CD8-positive, alpha-beta T cell (primary cell): ENCODE measurements at regions of chr13 and their contacts with region 1.

Region 1: GRCh38 chr13:21849323-21849722 is 178.4 kb downstream of the FGF9 start:
- DNase-seq: peak in 3 of 9 experiments; percentile 20 to 63 (median 53)
- ATAC-seq: peak; percentile 67
- H3K4me3 ChIP-seq: no peak overlapping the region
- H3K4me3 Mint-ChIP-seq: no peak overlapping the region
- H3K27ac ChIP-seq: no peak overlapping the region
- H3K27ac Mint-ChIP-seq: no peak overlapping the region
- H3K4me1 ChIP-seq: no peaks in the 10 kb centered on the region
- H3K4me1 Mint-ChIP-seq: peaks cover 3% of the 10 kb centered on the region
- H3K27me3 ChIP-seq: no peaks in the 10 kb centered on the region
- H3K27me3 Mint-ChIP-seq: peaks cover 4% of the 10 kb centered on the region
- CTCF ChIP-seq: peak; percentile 53

Region 2: DNA sequence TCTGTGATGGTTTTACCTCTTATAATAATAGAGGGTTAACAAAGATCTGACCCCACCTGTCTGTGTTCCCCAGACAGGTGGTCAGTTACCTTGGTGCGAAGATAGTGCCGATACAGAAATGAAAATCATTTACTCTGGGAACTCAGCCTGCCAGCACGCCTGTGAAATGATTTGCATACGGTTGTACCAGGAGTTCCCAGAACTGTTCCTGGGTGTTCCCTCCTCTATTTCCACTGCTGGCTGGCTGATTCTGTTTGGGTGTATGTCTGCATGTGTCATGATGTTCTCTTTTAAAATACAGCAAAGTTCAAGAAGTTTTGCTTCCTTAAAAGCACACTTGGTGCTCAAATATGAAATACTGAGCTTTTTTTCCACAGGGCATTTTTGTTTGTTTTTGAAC is 348.7 kb after region 1 on chr13:
- CTCF ChIA-PET with region 1: no interaction called
- POLR2A ChIA-PET with region 1: no interaction called
- intact Hi-C with region 1: no loop called
- DNase-seq: no peak
- ATAC-seq: no peak
- H3K4me3 ChIP-seq: no peak overlapping the region
- H3K4me3 Mint-ChIP-seq: no peak overlapping the region
- H3K27ac ChIP-seq: no peak overlapping the region
- H3K27ac Mint-ChIP-seq: no peak overlapping the region
- H3K4me1 ChIP-seq: no peaks in the 10 kb centered on the region
- H3K4me1 Mint-ChIP-seq: peaks cover 3% of the 10 kb centered on the region
- H3K27me3 ChIP-seq: no peaks in the 10 kb centered on the region
- H3K27me3 Mint-ChIP-seq: no peaks in the 10 kb centered on the region
- CTCF ChIP-seq: no peak

Region 3: DNA sequence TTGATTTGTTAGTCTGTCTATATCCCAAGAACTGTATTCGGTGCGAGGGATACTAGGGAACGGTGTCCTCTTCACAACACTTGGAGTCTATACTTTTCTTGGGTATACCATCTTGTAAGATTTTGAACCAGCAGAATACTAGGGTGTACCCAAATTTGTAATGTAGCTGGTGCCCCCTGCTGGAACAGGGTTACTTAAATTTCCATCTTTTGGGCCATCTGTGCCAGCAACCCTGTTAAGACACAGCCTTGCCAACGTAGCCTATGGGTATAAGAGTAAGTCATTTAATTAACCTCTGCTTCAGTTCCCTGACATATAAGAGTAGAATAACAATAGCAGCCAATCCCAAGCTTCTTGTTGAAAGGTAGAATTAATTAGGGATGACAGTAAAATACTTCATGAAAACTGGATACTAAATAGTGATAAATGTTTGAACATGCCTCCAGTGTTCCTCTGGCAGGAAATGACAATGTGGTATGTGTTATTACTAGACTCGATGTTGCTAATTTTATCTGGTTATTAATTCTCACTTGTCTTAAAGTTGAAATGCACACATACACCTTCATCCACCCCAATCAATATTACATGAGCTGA is 429.1 kb after region 1 on chr13:
- CTCF ChIA-PET with region 1: no interaction called
- POLR2A ChIA-PET with region 1: no interaction called
- intact Hi-C with region 1: loop called (anchors 1 to 2 kb)
- DNase-seq: peak; percentile 53 to 83 (median 71)
- ATAC-seq: peak; percentile 56
- H3K4me3 ChIP-seq: no peak overlapping the region
- H3K4me3 Mint-ChIP-seq: no peak overlapping the region
- H3K27ac ChIP-seq: no peak overlapping the region
- H3K27ac Mint-ChIP-seq: no peak overlapping the region
- H3K4me1 ChIP-seq: no peaks in the 10 kb centered on the region
- H3K4me1 Mint-ChIP-seq: peaks cover 11% of the 10 kb centered on the region
- H3K27me3 ChIP-seq: no peaks in the 10 kb centered on the region
- H3K27me3 Mint-ChIP-seq: peaks cover 2% of the 10 kb centered on the region
- CTCF ChIP-seq: peak; percentile 44